Activated CD4-positive, alpha-beta T cell treated with anti-CD3 and anti-CD28 coated beads for 36 hours (primary cell): ENCODE measurements at regions of chr14 and their contacts with region 1.

Region 1: GRCh38 chr14:61730756-61731373 is 31.4 kb upstream of the SNAPC1 start:
- DNase-seq: no peak
- ATAC-seq: no peak
- H3K4me3 Mint-ChIP-seq: no peak overlapping the region
- H3K27ac Mint-ChIP-seq: peak overlapping the region; percentile 48
- H3K4me1 Mint-ChIP-seq: peaks cover 43% of the 10 kb centered on the region
- H3K27me3 Mint-ChIP-seq: no peaks in the 10 kb centered on the region

Region 2: DNA sequence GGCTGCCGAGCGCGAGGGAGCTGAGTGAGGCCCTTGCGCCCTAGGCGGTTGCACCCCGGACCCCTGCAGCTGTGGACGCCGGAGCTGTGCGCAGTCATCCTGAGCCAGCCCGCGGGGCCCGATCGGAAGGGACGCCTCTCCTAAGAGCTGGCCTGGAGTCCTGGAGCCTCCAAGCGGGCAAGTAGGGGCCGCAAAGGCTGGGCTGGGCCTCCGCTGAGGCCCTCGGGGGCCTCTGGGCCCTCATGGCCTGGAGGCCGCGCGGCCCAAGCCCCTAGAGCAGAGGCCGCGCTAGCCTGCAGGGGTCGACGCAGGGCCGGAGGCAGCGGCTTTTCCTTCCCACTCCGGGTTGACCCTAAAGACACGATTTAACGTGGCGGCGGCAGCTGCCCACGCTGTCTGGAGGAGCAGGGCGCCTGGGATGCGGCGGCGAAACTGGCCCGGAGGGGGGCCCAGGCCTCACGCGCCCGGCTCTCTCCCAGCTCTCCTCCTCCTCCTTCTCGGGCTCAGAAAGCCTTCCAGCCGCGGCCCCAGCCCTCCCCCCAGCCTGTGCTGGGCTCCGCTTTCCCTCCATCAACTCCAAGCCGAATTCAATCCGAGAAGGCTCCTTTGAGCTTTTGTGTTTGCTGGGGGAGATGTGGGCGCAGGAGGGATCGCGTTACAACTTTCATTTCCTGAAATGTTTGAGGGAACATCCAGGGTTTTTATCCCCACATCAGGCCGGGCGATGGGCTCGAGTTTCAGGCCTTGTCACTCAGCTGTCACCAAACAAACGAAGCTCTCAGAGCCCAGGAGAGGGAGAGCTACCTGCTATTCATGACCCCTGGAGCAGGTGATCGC is 1093.2 kb before region 1 on chr14:
- CTCF ChIA-PET with region 1: no interaction called
- POLR2A ChIA-PET with region 1: no interaction called
- intact Hi-C with region 1: no loop called
- DNase-seq: peak; percentile 15
- ATAC-seq: no peak
- H3K4me3 Mint-ChIP-seq: peak overlapping the region; percentile 21
- H3K27ac Mint-ChIP-seq: no peak overlapping the region
- H3K4me1 Mint-ChIP-seq: peaks cover 21% of the 10 kb centered on the region
- H3K27me3 Mint-ChIP-seq: peaks cover 58% of the 10 kb centered on the region

Region 3: DNA sequence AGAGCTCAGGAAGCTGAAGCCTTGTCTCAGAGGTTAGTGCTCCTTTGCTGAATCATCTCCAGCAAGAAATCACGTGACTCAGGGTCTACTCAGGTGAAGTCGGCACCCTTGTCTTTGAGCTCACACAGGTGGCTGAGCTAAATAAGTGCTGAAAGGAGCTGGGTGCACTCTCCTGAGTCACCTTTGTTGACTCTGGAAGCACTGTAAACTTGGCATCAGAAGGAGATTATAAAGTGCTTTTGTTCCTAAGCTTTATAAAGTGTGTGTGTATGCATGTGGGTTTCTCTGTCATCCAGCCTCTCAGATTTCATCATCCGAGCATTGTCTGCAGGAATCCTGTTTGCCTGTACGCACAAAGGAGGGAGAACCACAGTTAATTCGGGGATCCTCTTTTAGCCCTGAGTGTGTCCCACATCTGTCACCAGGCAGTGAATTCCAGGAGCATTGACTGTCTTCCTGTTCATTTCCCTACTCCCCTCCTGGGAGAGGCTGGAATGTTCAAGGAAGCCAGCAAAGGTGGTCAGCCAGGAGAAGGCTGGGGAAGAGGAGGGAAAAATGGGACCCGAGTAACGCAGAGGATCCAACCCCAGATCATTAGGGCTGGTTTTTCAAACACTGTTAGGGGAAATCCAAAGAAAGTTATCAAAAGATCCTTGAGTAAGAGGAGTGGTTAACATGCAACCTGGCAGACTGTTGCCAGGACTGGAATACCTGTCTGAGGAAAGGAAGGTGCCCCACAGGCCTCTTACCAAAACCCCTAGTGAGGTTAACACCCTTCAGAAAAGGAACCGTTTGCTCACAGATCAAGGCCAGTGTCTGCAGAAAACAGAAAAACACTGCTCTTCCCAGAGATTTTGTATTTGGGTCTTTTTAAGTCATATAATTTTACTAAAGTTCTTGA is 193.1 kb before region 1 on chr14:
- CTCF ChIA-PET with region 1: no interaction called
- POLR2A ChIA-PET with region 1: interaction called, 14 read pairs
- intact Hi-C with region 1: no loop called
- DNase-seq: peak; percentile 69
- ATAC-seq: peak; percentile 78
- H3K4me3 Mint-ChIP-seq: peak overlapping the region; percentile 16
- H3K27ac Mint-ChIP-seq: peak overlapping the region; percentile 89
- H3K4me1 Mint-ChIP-seq: peaks cover 68% of the 10 kb centered on the region
- H3K27me3 Mint-ChIP-seq: no peaks in the 10 kb centered on the region

Region 4: DNA sequence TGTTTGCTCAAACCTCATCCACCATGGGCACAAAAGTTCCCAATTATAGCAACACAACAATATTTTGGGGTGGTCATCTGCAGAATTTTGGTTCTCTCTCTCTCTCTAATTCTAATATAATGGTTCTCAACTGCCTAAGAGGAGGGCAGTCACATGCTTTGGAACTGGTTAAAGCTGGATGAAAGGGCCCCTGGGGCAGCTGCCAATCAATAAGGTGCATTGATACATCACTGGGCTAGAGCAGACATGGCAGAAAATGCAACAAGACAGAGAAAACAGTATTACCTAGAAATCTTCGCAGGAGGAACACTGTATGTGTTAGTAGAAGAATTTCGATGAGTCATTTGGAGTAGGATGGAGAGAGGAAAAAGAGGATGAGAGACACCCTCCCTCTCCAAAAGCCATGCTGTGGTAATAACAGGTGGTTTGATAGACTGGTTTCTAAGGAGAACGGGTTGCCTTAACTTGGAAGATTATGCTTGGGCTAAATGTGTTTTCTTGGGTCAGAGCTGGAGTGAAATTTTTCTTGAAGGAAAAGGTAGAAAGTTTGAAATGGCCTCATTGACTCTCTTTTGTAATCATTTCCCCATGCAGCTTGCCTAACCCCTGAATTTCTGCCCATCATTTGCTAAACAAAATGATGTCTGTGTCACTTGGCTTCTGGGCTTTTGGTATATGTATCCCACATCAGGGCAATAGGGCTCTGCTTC is 102.7 kb before region 1 on chr14:
- CTCF ChIA-PET with region 1: no interaction called
- POLR2A ChIA-PET with region 1: no interaction called
- intact Hi-C with region 1: no loop called
- DNase-seq: no peak
- ATAC-seq: no peak
- H3K4me3 Mint-ChIP-seq: no peak overlapping the region
- H3K27ac Mint-ChIP-seq: no peak overlapping the region
- H3K4me1 Mint-ChIP-seq: peaks cover 33% of the 10 kb centered on the region
- H3K27me3 Mint-ChIP-seq: no peaks in the 10 kb centered on the region

Region 5: GRCh38 chr14:61719344-61720293 is 11.2 kb before region 1 on chr14:
- CTCF ChIA-PET with region 1: interaction called, 13 read pairs
- POLR2A ChIA-PET with region 1: interaction called, 8 read pairs
- intact Hi-C with region 1: no loop called
- DNase-seq: no peak
- ATAC-seq: peak; percentile 52
- H3K4me3 Mint-ChIP-seq: peak overlapping the region; percentile 41
- H3K27ac Mint-ChIP-seq: peak overlapping the region; percentile 81
- H3K4me1 Mint-ChIP-seq: peaks cover 83% of the 10 kb centered on the region
- H3K27me3 Mint-ChIP-seq: no peaks in the 10 kb centered on the region

Region 6: DNA sequence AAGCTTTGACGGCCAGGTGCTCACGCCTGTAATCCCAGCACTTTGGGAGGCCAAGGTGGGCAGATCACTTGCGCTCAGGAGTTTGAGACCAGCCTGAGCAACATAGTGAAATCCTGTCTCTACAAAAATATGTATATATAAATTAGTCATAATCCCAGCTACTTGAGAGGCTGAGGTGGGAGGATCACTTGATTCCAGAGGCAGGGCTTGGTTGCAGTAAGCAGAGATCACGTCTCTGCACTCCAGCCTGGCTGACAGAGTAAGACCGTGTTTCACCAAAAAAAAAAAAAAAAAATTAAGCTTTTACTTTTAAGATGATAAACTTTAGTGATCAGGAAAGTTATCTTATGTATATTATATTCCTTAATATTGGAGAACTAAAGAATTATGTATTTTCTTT is 13.4 kb after region 1 on chr14:
- CTCF ChIA-PET with region 1: interaction called, 17 read pairs
- POLR2A ChIA-PET with region 1: interaction called, 3 read pairs
- intact Hi-C with region 1: loop called in 1 of 2 experiments (anchors 2 kb)
- DNase-seq: no peak
- ATAC-seq: no peak
- H3K4me3 Mint-ChIP-seq: no peak overlapping the region
- H3K27ac Mint-ChIP-seq: no peak overlapping the region
- H3K4me1 Mint-ChIP-seq: peaks cover 7% of the 10 kb centered on the region
- H3K27me3 Mint-ChIP-seq: no peaks in the 10 kb centered on the region

Region 7: DNA sequence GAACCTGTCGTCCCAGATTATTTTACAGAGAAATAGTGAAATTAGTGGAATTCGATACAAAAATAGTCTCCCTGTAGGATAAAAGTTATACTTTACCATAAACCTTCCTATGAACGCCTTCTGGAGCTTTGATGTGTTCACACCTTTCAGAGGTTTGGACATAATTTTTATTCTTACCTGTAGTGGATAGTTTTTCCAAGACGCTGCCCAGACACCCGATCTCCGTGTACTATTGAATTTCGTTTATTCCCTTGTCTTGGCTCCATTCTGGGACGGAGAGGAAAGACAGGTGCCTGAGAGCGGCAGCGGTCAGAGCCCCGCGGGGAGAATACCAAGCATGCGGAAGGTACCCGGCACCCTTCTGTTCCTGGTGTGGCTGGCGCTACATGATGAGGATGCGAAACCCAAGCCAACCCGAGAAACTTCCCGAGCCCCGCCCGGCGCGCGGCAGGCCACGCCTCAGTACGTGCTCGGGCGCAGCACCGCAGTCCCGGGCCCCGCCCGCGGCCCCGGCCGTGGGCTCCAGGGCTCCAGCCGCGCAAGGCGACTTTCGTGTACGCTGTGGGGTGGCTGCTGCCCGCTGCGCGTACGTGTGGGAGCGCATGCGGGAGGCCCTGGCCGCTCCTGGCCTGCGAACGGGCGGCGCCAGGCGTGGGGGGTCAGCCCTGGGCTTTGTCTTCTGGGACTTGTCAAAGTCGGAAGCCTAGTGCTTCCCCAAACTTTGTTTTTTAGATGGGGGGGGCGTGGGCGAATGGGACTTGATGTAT is 20.0 kb after region 1 on chr14:
- CTCF ChIA-PET with region 1: interaction called, 9 read pairs
- POLR2A ChIA-PET with region 1: interaction called, 3 read pairs
- intact Hi-C with region 1: loop called in 1 of 2 experiments (anchors 2 kb)
- DNase-seq: peak; percentile 93
- ATAC-seq: peak; percentile 92
- H3K4me3 Mint-ChIP-seq: peak overlapping the region; percentile 97
- H3K27ac Mint-ChIP-seq: peak overlapping the region; percentile 89
- H3K4me1 Mint-ChIP-seq: peaks cover 22% of the 10 kb centered on the region
- H3K27me3 Mint-ChIP-seq: peaks cover 2% of the 10 kb centered on the region